Thyroid gland (tissue), 4 donors: ENCODE measurements at regions of chr19 and their contacts with region 1.

Region 1: GRCh38 chr19:54168174-54168917 is 4.6 kb downstream of the TMC4 start:
- DNase-seq: peak; percentile 88 to 91
- H3K4me3 ChIP-seq: no peak overlapping the region
- H3K27ac ChIP-seq: no peak overlapping the region
- H3K4me1 ChIP-seq: peaks cover 1 to 14% of the 10 kb centered on the region in 2 donors
- H3K27me3 ChIP-seq: no peaks in the 10 kb centered on the region
- CTCF ChIP-seq: peak; percentile 66 to 94 (median 74)
- POLR2A ChIP-seq: no peak

Region 2: GRCh38 chr19:54231077-54231931 is 63.0 kb after region 1 on chr19:
- intact Hi-C with region 1: loop called (anchors 5 kb)
- DNase-seq: peak; percentile 81 to 84
- H3K4me3 ChIP-seq: no peak overlapping the region
- H3K27ac ChIP-seq: no peak overlapping the region
- H3K4me1 ChIP-seq: no peaks in the 10 kb centered on the region
- H3K27me3 ChIP-seq: no peaks in the 10 kb centered on the region
- CTCF ChIP-seq: peak; percentile 69 to 89 (median 76)
- POLR2A ChIP-seq: no peak